Panc1 (cell line): ENCODE measurements at regions of chr14 and their contacts with region 1.

Region 1: DNA sequence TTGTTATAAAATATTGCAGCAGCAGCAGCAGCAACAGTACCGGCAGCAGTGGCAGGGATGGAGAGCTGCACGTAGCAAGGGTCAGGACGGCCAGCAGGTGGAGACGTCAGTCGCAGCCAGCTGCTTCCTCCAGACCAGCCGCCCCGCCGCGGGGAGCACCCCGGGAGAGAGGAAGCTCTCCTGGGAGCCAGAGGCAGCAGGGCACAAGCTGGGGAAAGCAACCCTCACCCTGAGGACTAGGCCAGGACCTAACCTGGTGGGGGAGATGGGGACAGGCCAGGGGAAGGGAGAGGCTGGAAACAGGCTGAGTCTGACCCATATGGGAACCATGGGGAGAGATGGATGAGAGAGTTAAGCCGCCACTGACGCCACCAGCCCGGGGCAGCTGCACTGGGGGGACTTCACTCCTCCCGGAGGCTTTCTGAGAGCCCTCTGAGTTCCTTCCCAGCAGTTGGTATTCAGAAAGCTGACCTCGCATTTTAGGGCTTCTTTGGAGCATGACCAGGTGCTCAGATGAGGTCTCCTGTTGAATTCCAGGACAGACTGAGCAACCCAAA is 56.3 kb downstream of the SPTB start:
- DNase-seq: no peak
- ATAC-seq: peak; percentile 97
- H3K4me3 ChIP-seq: peak overlapping the region in 1 of 2 experiments; percentile 20; a peak in 1 of 4 replicates
- H3K27ac ChIP-seq: no peak overlapping the region
- H3K4me1 ChIP-seq: no peaks in the 10 kb centered on the region
- H3K27me3 ChIP-seq: no peaks in the 10 kb centered on the region
- CTCF ChIP-seq: peak; percentile 84

Region 2: DNA sequence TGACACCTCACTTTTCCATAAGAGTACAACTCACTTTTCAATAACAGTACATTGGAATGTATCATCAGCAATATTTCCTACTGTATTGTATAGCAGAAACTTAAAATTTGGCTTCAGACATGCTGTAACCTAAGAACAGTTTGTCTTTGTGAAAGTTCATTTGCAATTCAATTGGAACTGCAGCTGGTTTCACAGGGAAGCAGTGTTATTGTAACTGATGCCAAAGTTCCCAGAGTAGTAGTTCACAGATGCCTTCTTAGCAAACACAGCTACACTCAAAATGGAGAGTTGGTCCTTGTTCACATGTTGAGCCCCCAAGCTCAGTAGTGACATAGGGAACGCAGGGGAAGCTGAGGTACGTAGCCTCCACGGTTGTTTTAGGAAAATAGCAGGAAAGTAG is 250.3 kb before region 1 on chr14:
- CTCF ChIA-PET with region 1: no interaction called
- POLR2A ChIA-PET with region 1: interaction called, 11 read pairs
- in situ Hi-C with region 1: no loop called
- intact Hi-C with region 1: no loop called
- DNase-seq: no peak
- ATAC-seq: no peak
- H3K4me3 ChIP-seq: no peak overlapping the region
- H3K27ac ChIP-seq: no peak overlapping the region
- H3K4me1 ChIP-seq: peaks cover 9% of the 10 kb centered on the region
- H3K27me3 ChIP-seq: no peaks in the 10 kb centered on the region
- CTCF ChIP-seq: no peak

Region 3: DNA sequence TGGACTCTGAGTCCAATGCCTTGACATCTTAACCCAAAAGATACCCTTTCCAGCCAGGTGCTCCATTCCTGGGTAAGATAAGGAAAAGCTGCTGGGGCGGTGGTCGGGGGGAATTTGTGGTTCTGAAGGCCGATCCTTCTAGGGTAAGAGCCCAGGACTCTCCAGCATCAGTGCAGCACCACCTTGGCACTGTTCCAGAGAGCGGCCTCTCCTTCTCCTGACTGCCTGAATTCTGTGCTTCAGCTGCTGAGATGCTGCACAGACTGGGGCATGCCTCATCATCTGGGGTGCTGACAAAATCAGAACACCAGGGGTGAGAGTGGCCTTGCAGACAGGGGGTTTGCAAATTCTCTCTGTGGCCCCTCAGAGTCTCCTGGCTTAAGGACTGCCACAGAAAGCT is 31.2 kb before region 1 on chr14:
- CTCF ChIA-PET with region 1: no interaction called
- POLR2A ChIA-PET with region 1: no interaction called
- in situ Hi-C with region 1: no loop called
- intact Hi-C with region 1: no loop called
- DNase-seq: no peak
- ATAC-seq: no peak
- H3K4me3 ChIP-seq: no peak overlapping the region
- H3K27ac ChIP-seq: no peak overlapping the region
- H3K4me1 ChIP-seq: no peaks in the 10 kb centered on the region
- H3K27me3 ChIP-seq: no peaks in the 10 kb centered on the region
- CTCF ChIP-seq: no peak